IMR-90 (cell line): ENCODE measurements at regions of chr16 and their contacts with region 1.

Region 1: DNA sequence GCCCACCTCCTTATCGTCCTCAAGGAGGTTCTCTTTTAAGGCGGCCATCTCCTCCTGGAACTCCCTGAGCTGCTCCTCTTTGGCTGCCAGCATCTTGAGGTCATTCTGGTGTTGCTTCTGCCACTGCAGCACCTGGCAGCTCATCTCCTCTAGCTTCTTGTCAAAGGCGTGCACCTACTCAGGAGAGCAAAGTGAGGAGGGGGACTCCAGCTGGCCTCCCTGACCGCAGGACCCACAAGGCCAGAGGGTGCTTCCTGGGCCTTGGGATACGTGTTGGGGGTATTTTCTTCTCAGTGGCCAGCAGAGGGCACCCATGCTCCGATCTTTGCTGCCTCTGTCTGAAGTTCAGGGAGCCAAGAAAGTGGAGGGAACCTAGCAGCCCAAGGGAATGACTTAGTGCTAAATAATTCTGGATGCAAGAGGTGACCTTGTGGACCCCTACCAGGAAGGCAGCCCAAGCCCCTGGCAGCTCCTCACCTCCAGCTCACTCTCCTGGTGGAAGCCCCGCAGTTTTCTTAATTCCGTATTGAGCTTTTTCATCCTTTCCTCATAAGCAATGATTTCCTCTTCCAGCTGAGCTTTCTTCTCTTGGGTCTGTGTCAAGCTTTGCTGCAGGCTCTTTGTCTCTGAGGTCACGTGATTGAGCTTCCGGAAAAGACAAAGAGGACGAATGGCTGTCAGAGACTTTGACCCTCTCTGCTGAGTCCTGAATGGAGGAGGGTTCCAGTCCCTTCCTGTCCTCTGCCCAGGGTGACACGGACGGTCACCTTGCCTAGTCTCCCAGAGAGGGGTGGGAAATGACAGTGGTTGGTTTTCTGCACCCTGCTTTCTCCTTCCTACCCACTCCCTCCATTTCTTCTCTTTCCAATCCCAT is 31.4 kb downstream of the DHX38 start:
- DNase-seq: peak; percentile 69
- ATAC-seq: peak; percentile 97
- H3K4me3 ChIP-seq: no peak overlapping the region
- H3K27ac ChIP-seq: no peak overlapping the region
- H3K4me1 ChIP-seq: no peaks in the 10 kb centered on the region
- H3K27me3 ChIP-seq: peaks cover 4% of the 10 kb centered on the region; the same call in 1 of the 2 replicates
- CTCF ChIP-seq: peak; percentile 80
- POLR2A ChIP-seq: no peak
- RAD21 ChIP-seq: peak; percentile 84

Region 2: GRCh38 chr16:72236866-72237265 is 111.9 kb after region 1 on chr16:
- CTCF ChIA-PET with region 1: no interaction called
- POLR2A ChIA-PET with region 1: no interaction called
- dilution Hi-C with region 1: no loop called
- in situ Hi-C with region 1: no loop called
- intact Hi-C with region 1: loop called (anchors 5 kb)
- DNase-seq: no peak
- ATAC-seq: no peak
- H3K4me3 ChIP-seq: no peak overlapping the region
- H3K27ac ChIP-seq: no peak overlapping the region
- H3K4me1 ChIP-seq: no peaks in the 10 kb centered on the region
- H3K27me3 ChIP-seq: no peaks in the 10 kb centered on the region
- CTCF ChIP-seq: no peak
- POLR2A ChIP-seq: no peak
- RAD21 ChIP-seq: no peak

Region 3: DNA sequence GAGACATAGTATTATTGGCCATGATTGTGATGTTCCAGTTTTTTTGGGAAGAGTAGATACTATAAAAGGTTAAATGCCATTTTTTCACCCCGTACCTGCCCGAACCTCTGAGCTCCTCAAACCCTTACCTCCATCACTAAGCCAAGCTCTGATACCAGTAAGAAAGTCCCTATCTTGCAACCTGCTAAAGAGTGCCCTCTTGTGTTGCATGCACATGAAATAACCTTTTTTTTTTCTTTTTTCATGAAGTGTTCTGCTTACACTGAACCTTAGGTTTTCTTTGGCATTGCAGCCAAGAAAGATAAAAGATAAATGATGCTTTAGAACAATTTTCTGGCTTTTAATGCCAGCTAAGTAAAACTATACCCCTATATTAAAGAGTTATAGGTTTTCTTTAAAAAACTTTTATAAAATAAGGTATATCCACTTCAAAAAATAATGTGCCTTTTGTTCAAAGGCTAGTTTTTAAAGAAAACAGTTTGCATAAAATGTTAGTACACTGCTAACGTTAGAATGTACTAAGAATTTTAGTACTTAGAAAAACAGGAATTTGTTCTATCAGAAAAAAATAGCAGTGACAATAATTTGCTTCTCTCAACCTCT is 342.3 kb after region 1 on chr16:
- CTCF ChIA-PET with region 1: interaction called, 5 read pairs
- POLR2A ChIA-PET with region 1: no interaction called
- dilution Hi-C with region 1: no loop called
- in situ Hi-C with region 1: loop called (anchors 10 kb)
- intact Hi-C with region 1: loop called (anchors 1 kb)
- DNase-seq: peak; percentile 60
- ATAC-seq: peak; percentile 79
- H3K4me3 ChIP-seq: no peak overlapping the region
- H3K27ac ChIP-seq: no peak overlapping the region
- H3K4me1 ChIP-seq: no peaks in the 10 kb centered on the region
- H3K27me3 ChIP-seq: no peaks in the 10 kb centered on the region
- CTCF ChIP-seq: peak; percentile 75
- POLR2A ChIP-seq: no peak
- RAD21 ChIP-seq: peak; percentile 73

Region 4: GRCh38 chr16:73878611-73879010 is 1753.6 kb after region 1 on chr16:
- CTCF ChIA-PET with region 1: interaction called, 5 read pairs
- POLR2A ChIA-PET with region 1: no interaction called
- dilution Hi-C with region 1: no loop called
- in situ Hi-C with region 1: no loop called
- intact Hi-C with region 1: loop called (anchors 1 kb)
- DNase-seq: peak; percentile 76
- ATAC-seq: peak; percentile 77
- H3K4me3 ChIP-seq: no peak overlapping the region
- H3K27ac ChIP-seq: no peak overlapping the region
- H3K4me1 ChIP-seq: no peaks in the 10 kb centered on the region
- H3K27me3 ChIP-seq: no peaks in the 10 kb centered on the region
- CTCF ChIP-seq: peak; percentile 67
- POLR2A ChIP-seq: no peak
- RAD21 ChIP-seq: peak; percentile 84

Region 5: DNA sequence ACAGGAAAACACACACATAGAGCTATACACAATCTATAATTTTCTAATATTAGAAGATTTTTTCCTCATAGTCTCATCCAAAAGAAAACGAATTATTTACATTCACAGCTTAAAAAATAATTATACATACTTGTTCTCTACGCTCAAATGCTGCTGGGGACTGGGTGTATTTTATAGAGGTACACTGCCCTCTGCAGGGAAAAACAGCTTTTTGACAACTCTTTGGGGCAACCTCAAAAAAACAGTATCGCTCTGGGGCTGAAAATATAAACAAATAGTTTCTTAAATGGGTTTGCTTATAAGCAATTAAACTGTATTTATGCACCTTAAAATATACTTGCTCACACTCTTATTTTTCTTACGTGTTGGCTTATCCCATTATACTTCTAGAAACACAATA is 1909.9 kb after region 1 on chr16:
- CTCF ChIA-PET with region 1: no interaction called
- POLR2A ChIA-PET with region 1: no interaction called
- dilution Hi-C with region 1: no loop called
- in situ Hi-C with region 1: no loop called
- intact Hi-C with region 1: loop called (anchors 10 kb)
- DNase-seq: peak; percentile 11
- ATAC-seq: peak; percentile 56; the same call in 1 of the 2 replicates
- H3K4me3 ChIP-seq: no peak overlapping the region
- H3K27ac ChIP-seq: no peak overlapping the region
- H3K4me1 ChIP-seq: no peaks in the 10 kb centered on the region
- H3K27me3 ChIP-seq: no peaks in the 10 kb centered on the region; the same call in 1 of the 2 replicates
- CTCF ChIP-seq: 0 out of 2 replicates have a peak, but pooled peaks have one; percentile 29
- POLR2A ChIP-seq: no peak
- RAD21 ChIP-seq: peak; percentile 37